Heart left ventricle (tissue), 16 donors: ENCODE measurements at regions of chr16 and their contacts with region 1.

Region 1: GRCh38 chr16:10529895-10530669 is 50.3 kb downstream of the EMP2 start:
- DNase-seq: no peak
- ATAC-seq: peak in 3 of 4 donors; percentile 40 to 64 (median 60)
- H3K4me3 ChIP-seq: no peak overlapping the region
- H3K27ac ChIP-seq: peak overlapping the region in 7 of 12 donors; percentile 5 to 62 (median 43)
- H3K4me1 ChIP-seq: peaks cover 0 to 9% (median 4%) of the 10 kb centered on the region in 12 donors
- H3K27me3 ChIP-seq: no peaks in the 10 kb centered on the region
- CTCF ChIP-seq: no peak
- POLR2A ChIP-seq: no peak

Region 2: DNA sequence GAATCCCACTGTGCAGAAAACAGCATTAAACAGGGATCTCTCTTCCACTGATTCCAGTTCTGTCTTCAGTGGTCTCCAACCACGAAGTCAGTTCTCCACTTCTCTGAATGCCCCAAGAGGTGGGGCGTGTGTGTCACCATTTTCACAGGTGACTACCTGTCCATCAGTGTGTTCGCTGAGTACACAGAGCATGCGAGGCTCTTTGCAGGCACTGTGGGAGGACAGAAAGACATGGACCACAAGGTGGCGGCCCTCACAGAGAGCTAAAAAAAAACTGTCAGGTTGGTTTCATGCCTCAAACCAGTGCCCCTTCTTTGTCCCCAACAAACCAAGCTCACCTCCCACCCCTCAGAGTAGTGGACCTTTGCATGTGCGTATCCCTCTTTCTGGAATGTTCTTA is 36.5 kb after region 1 on chr16:
- intact Hi-C with region 1: loop called in 3 of 10 experiments (anchors 5 to 10 kb)
- DNase-seq: no peak
- ATAC-seq: no peak
- H3K4me3 ChIP-seq: no peak overlapping the region
- H3K27ac ChIP-seq: peak overlapping the region in 2 of 12 donors; percentile 65 to 84
- H3K4me1 ChIP-seq: peaks cover 4 to 77% (median 57%) of the 10 kb centered on the region in 12 donors
- H3K27me3 ChIP-seq: no peaks in the 10 kb centered on the region
- CTCF ChIP-seq: no peak
- POLR2A ChIP-seq: no peak

Region 3: DNA sequence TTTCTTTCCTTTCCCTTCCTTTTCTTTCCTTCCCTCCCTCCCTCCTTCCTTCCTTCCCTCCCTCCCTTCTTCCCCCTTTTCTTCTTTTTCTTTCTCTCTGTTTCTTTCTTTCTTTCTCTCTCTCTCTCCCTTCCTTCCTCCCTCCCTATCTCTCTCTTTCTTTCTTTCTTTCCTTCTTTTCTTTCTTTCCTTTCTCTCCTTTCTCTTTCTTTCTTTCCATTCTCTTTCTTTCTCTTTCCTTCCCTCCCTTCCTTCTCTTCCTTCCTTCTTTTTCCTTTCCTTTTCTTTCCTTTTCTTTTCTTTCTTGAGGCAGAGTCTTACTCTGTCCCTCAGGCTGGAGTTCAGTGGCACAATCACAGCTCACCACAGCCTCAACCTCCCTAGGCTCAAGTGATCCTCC is 381.2 kb after region 1 on chr16:
- intact Hi-C with region 1: loop called in 1 of 10 experiments (anchors 5 kb)
- DNase-seq: no peak
- ATAC-seq: no peak
- H3K4me3 ChIP-seq: no peak overlapping the region
- H3K27ac ChIP-seq: no peak overlapping the region
- H3K4me1 ChIP-seq: peaks cover 0 to 11% (median 0%) of the 10 kb centered on the region in 12 donors
- H3K27me3 ChIP-seq: no peaks in the 10 kb centered on the region
- CTCF ChIP-seq: no peak
- POLR2A ChIP-seq: no peak